Activated CD8-positive, alpha-beta T cell treated with anti-CD3 and anti-CD28 coated beads for 36 hours (primary cell): ENCODE measurements at regions of chr7 and their contacts with region 1.

Region 1: DNA sequence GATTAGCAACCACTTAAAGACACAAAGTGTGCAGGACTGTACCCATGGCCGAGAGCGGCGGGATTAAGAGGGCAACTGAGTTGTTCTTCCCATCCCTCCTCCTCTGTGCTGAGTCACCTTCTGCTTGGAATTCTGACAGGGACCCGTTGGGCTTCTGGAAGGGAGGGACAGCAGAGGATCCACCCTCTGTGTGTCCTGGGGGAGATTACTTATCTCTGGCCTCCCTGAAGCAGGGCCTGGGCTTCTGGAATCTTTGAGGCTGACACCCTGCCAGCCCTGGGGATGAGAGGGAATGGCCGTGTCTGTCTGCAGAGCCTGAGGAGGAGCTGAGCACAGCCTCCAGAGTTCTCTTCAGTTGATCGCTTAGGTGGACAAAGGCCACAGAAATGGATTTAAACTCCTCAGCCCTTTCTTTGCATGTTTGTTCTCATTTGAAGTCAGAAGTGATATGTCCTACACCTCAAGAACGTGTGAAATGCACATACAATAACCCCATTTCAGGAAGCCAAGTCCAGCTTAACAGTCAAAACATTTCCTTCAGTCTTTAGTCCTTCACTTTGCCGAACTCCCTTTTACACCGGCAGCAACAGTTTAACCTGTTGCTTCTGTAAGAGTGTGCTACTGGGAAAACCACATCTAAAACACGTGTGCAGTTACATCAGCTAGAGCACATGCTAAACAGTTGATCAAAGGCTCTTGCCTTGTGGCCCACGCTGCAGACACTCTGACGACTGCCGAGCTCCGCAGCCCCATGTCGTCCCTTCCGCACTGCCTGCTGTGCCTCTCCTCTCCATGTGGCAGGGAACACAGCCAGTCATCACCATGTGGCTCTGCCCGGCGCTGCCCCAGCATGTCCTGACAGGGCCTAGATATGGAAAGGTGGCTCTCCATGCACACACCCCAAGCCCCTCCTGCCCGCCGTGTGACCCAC is 55.7 kb downstream of the IKZF1 start:
- DNase-seq: peak; percentile 90
- ATAC-seq: peak; percentile 75
- H3K4me3 Mint-ChIP-seq: peak overlapping the region; percentile 69
- H3K27ac Mint-ChIP-seq: peak overlapping the region; percentile 99
- H3K4me1 Mint-ChIP-seq: peaks cover 93% of the 10 kb centered on the region
- H3K27me3 Mint-ChIP-seq: no peaks in the 10 kb centered on the region
- CTCF ChIP-seq: no peak

Region 2: DNA sequence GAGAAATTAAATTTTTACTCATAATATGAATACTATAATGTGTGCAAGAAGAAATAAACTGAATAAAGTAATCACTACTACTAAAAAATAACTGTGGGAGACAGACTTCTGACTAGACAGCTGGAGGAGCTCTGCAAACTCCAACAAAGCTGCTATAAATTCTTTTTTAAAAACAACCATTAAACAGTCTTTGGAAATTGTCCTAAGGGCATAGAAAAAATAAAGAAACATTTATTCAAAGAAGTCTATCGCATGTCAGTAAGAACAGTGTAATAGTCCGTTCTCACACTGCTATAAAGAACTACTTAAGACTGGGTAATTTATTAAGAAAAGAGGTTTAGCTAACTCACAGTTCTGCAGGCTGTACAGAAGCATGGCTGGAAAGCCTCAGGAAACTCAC is 323.2 kb before region 1 on chr7:
- CTCF ChIA-PET with region 1: no interaction called
- POLR2A ChIA-PET with region 1: no interaction called
- intact Hi-C with region 1: no loop called
- DNase-seq: no peak
- ATAC-seq: no peak
- H3K4me3 Mint-ChIP-seq: no peak overlapping the region
- H3K27ac Mint-ChIP-seq: no peak overlapping the region
- H3K4me1 Mint-ChIP-seq: no peaks in the 10 kb centered on the region
- H3K27me3 Mint-ChIP-seq: peaks cover 11% of the 10 kb centered on the region
- CTCF ChIP-seq: no peak

Region 3: DNA sequence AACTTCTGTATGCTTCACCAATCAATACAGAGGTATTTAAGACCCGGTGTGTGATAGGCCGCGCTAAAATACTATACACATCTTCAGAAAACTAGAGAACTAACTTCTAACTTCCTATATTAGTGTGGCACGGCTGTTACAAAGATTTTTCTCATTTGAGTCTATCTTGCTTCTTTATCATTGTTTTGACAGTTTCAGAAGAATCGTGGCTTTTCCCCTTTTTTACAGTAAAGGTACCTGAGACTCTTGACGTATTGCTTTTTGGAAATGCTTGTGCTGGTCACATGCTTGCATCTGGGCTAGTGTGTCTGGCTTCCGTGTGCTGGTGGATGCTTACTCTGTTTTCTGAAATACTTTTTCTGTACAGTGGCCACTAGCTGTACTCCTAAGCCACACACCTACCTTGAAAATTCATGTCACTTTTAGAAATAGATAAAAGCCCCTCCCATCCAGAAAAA is 43.0 kb before region 1 on chr7:
- CTCF ChIA-PET with region 1: interaction called, 42 read pairs
- POLR2A ChIA-PET with region 1: interaction called, 1,646 read pairs
- intact Hi-C with region 1: no loop called
- DNase-seq: peak; percentile 75
- ATAC-seq: peak; percentile 82
- H3K4me3 Mint-ChIP-seq: peak overlapping the region; percentile 94
- H3K27ac Mint-ChIP-seq: peak overlapping the region; percentile 97
- H3K4me1 Mint-ChIP-seq: peaks cover 88% of the 10 kb centered on the region
- H3K27me3 Mint-ChIP-seq: no peaks in the 10 kb centered on the region
- CTCF ChIP-seq: peak; percentile 7

Region 4: DNA sequence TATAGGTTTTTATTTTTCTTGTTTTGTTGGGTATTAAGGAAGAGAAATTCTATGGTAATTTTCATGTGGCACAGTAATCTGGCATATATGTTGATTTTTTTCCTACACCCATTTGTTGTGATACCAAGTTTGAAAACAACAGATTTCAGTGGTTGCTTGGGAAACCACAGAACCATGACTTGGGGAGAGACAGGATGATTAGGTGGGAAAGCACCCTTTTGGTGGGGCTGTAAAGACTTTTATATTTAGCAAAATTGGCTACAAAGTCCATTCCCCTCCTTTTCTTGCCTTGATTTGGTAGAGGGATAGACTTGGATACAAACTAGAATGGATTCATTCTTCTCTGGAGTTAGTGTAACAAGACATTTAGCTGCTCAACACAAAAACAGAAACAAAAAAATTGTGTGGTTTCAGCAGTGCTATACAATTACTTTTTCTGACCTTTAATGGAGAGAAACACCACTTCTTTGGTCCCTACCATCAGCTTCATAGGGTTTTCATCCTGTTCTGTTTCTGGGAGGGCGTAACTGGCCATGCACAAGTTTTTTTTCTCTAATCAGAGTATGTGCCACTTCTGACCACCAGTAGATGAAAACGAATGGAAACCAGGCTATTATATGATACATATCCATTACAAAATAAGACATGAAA is 37.2 kb after region 1 on chr7:
- CTCF ChIA-PET with region 1: interaction called, 3 read pairs
- POLR2A ChIA-PET with region 1: interaction called, 6 read pairs
- intact Hi-C with region 1: loop called (anchors 5 kb)
- DNase-seq: peak; percentile 69
- ATAC-seq: peak; percentile 16
- H3K4me3 Mint-ChIP-seq: no peak overlapping the region
- H3K27ac Mint-ChIP-seq: peak overlapping the region; percentile 88
- H3K4me1 Mint-ChIP-seq: peaks cover 81% of the 10 kb centered on the region
- H3K27me3 Mint-ChIP-seq: no peaks in the 10 kb centered on the region
- CTCF ChIP-seq: no peak